HCT116 (cell line): ENCODE measurements at regions of chr9 and their contacts with region 1.

Region 1: DNA sequence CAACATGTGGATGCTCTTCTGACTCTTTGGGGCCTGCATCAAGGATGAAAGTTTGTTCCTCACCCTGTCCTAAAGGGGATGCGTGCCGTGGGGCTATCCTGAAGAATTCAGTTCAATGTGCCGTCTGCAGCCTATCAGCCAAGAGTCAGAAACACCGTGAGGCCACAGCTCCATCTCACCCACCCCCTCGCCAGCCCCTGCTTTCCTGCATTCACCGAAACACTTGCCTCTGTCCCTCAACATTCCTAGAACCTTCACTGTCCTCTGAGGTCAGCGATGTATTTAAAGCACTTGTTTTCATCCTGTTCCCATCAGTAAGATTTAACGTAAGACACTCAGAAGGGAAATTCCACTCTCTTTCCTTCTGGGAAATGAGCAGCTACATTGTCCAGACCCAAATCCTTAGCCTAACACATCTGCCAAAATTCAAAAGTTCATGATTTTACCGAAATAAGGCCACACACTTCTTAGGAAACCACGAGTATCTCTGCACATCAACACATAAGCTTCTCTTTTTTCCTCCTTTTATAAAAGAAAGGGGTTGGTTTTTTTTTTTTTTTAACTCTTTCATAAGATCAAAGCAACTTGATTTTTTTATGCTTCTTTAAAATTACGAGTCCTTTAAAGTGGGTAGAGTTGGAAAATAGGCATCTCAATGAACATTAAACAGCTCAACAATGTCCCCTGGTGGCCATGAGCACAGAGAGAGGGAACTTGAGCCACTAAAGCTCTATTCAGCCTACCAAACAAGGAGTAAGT is 100.7 kb downstream of the SUSD1 start:
- DNase-seq: peak; percentile 54
- ATAC-seq: peak; percentile 83
- H3K4me3 ChIP-seq: no peak overlapping the region
- H3K27ac ChIP-seq: no peak overlapping the region
- H3K4me1 ChIP-seq: peaks cover 16 to 51% of the 10 kb centered on the region in 2 experiments
- H3K27me3 ChIP-seq: no peaks in the 10 kb centered on the region
- CTCF ChIP-seq: peak; percentile 89 to 97 (median 90)
- POLR2A ChIP-seq: no peak
- RAD21 ChIP-seq: peak; percentile 97

Region 2: GRCh38 chr9:111631071-111631971 is 443.1 kb before region 1 on chr9 and contains the start of gene DNAJC25:
- CTCF ChIA-PET with region 1: no interaction called
- POLR2A ChIA-PET with region 1: interaction called, 4 read pairs
- RAD21 ChIA-PET with region 1: no interaction called
- intact Hi-C with region 1: loop called (anchors 10 kb)
- DNase-seq: peak; percentile 97
- ATAC-seq: peak; percentile 98
- H3K4me3 ChIP-seq: peak within 1 kb of the TSS; percentile 93
- H3K27ac ChIP-seq: peak within 1 kb of the TSS; percentile 81
- H3K4me1 ChIP-seq: peaks cover 2 to 17% of the 10 kb centered on the region in 2 experiments; a peak in 2 of 4 replicates
- H3K27me3 ChIP-seq: no peaks in the 10 kb centered on the region
- CTCF ChIP-seq: no peak
- POLR2A ChIP-seq: peak; percentile 99
- RAD21 ChIP-seq: no peak
- total RNA-seq, gene DNAJC25: 7.1 TPM

Region 3: GRCh38 chr9:111828193-111828592 is 246.2 kb before region 1 on chr9:
- CTCF ChIA-PET with region 1: no interaction called
- POLR2A ChIA-PET with region 1: no interaction called
- RAD21 ChIA-PET with region 1: no interaction called
- intact Hi-C with region 1: loop called (anchors 2 kb)
- DNase-seq: no peak
- ATAC-seq: no peak
- H3K4me3 ChIP-seq: no peak overlapping the region
- H3K27ac ChIP-seq: no peak overlapping the region
- H3K4me1 ChIP-seq: 0 out of 4 replicates have a peak, but pooled peaks cover 0 to 4% of the 10 kb centered on the region in 2 experiments
- H3K27me3 ChIP-seq: no peaks in the 10 kb centered on the region
- CTCF ChIP-seq: peak in 1 of 3 experiments; percentile 19; a peak in 1 of 6 replicates
- POLR2A ChIP-seq: no peak
- RAD21 ChIP-seq: peak; percentile 60

Region 4: GRCh38 chr9:111896353-111896958 is 178.0 kb before region 1 on chr9 and contains the start of gene UGCG:
- CTCF ChIA-PET with region 1: no interaction called
- POLR2A ChIA-PET with region 1: no interaction called
- RAD21 ChIA-PET with region 1: interaction called in 1 of 2 experiments, 3 read pairs
- intact Hi-C with region 1: loop called (anchors 2 kb)
- DNase-seq: peak; percentile 72
- ATAC-seq: peak; percentile 83
- H3K4me3 ChIP-seq: peak within 1 kb of the TSS; percentile 77 to 81
- H3K27ac ChIP-seq: peak within 1 kb of the TSS; percentile 92
- H3K4me1 ChIP-seq: peaks cover 29 to 86% of the 10 kb centered on the region in 2 experiments
- H3K27me3 ChIP-seq: no peaks in the 10 kb centered on the region
- CTCF ChIP-seq: no peak
- POLR2A ChIP-seq: peak; percentile 98
- RAD21 ChIP-seq: no peak
- total RNA-seq, gene UGCG: 32.6 TPM